Heart left ventricle (tissue), 16 donors: ENCODE measurements at regions of chr10 and their contacts with region 1.

Region 1: DNA sequence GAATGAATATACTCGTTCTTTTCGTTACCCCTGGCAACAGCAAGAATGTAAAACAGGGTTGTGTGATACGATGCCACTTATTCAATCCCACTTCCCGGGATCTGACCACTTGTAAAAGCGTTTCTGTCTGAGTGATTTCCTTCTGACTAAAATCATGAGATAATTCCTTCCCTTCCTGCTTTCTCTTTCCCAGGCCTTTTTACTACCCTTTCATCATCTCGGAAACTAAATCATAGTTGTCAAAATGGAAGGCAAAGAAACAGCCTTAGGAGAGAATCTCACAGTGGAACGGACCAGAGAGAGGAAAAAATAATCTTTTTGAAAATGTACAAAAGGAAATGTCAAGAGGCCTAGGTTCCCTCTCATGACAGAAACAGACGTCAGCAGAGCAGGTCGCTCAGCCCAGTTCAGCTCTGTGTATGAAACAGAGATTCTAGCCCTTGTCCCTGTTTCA is 29.8 kb downstream of the DIP2C start:
- DNase-seq: no peak
- ATAC-seq: peak in 2 of 4 donors; percentile 32 to 33
- H3K4me3 ChIP-seq: peak overlapping the region in 1 of 12 donors; percentile 18
- H3K27ac ChIP-seq: peak overlapping the region in 11 of 12 donors; percentile 38 to 87 (median 77)
- H3K4me1 ChIP-seq: peaks cover 3 to 62% (median 32%) of the 10 kb centered on the region in 12 donors
- H3K27me3 ChIP-seq: no peaks in the 10 kb centered on the region
- CTCF ChIP-seq: no peak
- POLR2A ChIP-seq: no peak

Region 2: GRCh38 chr10:615583-616152 is 44.0 kb before region 1 on chr10:
- intact Hi-C with region 1: loop called in 1 of 10 experiments (anchors 5 kb)
- DNase-seq: no peak
- ATAC-seq: no peak
- H3K4me3 ChIP-seq: no peak overlapping the region
- H3K27ac ChIP-seq: peak overlapping the region in 1 of 12 donors; percentile 70
- H3K4me1 ChIP-seq: peaks cover 0 to 78% (median 44%) of the 10 kb centered on the region in 12 donors
- H3K27me3 ChIP-seq: no peaks in the 10 kb centered on the region
- CTCF ChIP-seq: no peak
- POLR2A ChIP-seq: no peak